IMR-90 (cell line): ENCODE measurements at regions of chr12 and their contacts with region 1.

Region 1: GRCh38 chr12:63917864-63918799 is 73.6 kb downstream of the SRGAP1 start:
- DNase-seq: peak; percentile 96
- ATAC-seq: peak; percentile 56
- H3K4me3 ChIP-seq: no peak overlapping the region
- H3K27ac ChIP-seq: peak overlapping the region; percentile 100
- H3K4me1 ChIP-seq: peaks cover 25% of the 10 kb centered on the region
- H3K27me3 ChIP-seq: no peaks in the 10 kb centered on the region
- CTCF ChIP-seq: no peak
- POLR2A ChIP-seq: 0 out of 2 replicates have a peak, but pooled peaks have one; percentile 56
- RAD21 ChIP-seq: peak; percentile 4; the same call in 1 of the 2 replicates

Region 2: DNA sequence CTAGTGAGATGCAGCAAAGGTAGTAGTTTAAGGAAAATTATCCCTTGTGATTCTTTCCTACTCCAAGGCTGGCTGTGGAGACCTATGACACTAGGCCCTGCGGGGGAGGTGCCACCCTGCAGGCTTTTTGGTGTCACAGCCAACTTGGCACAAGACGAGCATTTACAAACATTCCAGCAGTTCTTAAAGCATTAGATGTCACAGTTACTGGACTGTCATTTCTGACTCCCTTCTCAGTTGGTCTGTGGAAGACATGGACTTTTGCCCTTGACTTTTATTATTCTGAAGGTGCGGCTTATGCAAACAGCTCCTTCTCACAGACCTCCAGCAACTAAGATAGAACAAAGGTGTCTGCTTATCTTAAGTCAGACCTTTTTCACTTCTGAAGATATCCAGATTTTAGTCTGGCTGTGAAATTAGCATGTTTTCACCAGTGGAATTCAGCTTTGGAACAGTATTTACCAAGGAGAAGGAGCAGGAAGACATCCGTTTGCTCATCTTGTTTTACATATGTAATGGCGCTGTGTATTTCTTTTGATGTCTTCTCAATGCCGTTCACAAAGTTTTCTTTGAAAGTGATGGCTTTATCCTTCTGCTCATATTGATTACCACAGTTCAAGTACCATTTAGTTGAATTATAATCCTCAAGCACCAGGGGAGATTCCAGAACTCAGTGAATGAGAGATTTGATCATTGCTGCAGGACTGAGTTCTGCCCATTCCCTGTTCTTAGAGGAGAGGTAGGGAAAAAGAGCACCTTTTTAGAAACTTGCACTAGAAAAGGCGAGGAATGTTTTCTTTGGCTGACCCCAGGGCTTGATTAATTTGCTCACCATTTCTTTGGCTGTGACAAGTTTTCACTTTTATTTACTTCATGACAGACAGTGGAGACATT is 55.7 kb before region 1 on chr12:
- CTCF ChIA-PET with region 1: no interaction called
- POLR2A ChIA-PET with region 1: no interaction called
- dilution Hi-C with region 1: no loop called
- in situ Hi-C with region 1: no loop called
- intact Hi-C with region 1: loop called (anchors 5 kb)
- DNase-seq: no peak
- ATAC-seq: no peak; the same call in 1 of the 2 replicates
- H3K4me3 ChIP-seq: no peak overlapping the region
- H3K27ac ChIP-seq: peak overlapping the region; percentile 40; the same call in 1 of the 2 replicates
- H3K4me1 ChIP-seq: peaks cover 18% of the 10 kb centered on the region
- H3K27me3 ChIP-seq: no peaks in the 10 kb centered on the region
- CTCF ChIP-seq: no peak
- POLR2A ChIP-seq: no peak
- RAD21 ChIP-seq: no peak

Region 3: DNA sequence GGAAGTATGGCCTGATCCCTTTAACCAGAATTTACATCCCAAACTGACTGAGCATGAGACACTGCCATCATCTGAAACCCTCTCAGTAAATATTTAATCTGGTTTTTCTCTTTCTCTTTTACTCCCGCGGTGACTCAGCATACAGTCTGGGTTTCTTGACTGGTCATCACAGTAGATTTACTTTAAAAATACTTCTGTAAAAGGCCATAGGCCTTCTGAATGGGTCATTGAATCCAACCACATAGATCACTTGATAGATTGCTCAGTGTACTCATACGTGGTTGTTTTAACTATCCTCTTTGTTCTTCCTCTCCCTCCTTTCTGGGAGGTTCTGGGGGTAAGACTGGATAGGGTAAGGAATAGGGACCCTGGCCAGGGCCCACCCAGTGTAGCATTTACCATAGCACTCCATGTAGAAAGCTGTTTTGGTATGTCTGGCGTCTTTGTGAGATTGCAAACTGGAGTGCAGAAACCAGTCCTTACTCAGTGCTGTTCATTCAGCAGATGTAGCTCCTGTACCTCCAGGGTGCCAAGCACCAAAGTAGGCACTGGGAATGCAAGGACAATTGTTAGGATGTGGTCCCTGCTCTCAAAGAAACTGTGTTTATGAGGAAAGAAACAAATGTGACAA is 92.1 kb after region 1 on chr12:
- CTCF ChIA-PET with region 1: no interaction called
- POLR2A ChIA-PET with region 1: no interaction called
- dilution Hi-C with region 1: no loop called
- in situ Hi-C with region 1: no loop called
- intact Hi-C with region 1: loop called (anchors 2 kb)
- DNase-seq: peak; percentile 95
- ATAC-seq: peak; percentile 83
- H3K4me3 ChIP-seq: no peak overlapping the region
- H3K27ac ChIP-seq: peak overlapping the region; percentile 98
- H3K4me1 ChIP-seq: peaks cover 21% of the 10 kb centered on the region
- H3K27me3 ChIP-seq: no peaks in the 10 kb centered on the region
- CTCF ChIP-seq: 0 out of 2 replicates have a peak, but pooled peaks have one; percentile 8
- POLR2A ChIP-seq: no peak
- RAD21 ChIP-seq: peak; percentile 23

Region 4: DNA sequence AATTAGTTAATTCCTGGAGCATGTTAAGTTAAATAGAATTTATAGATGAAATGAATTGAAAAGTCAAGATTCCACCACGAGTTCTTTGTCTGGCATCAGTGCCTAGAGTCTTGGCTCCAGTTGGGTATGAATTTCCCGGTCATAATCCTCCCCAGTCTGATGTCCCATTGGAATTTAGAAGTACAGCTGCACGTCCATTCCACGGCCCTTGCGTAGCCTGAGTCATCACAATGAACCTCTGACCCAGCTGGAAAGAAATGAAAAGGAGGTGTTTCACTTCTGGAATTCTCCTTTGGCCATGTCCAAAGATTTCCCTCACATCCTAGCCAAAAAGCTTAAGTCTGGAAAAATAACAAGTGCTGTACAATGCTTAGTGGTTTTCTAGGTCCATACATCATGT is 181.3 kb after region 1 on chr12:
- CTCF ChIA-PET with region 1: no interaction called
- POLR2A ChIA-PET with region 1: no interaction called
- dilution Hi-C with region 1: no loop called
- in situ Hi-C with region 1: no loop called
- intact Hi-C with region 1: loop called (anchors 5 kb)
- DNase-seq: peak; percentile 96
- ATAC-seq: peak; percentile 85
- H3K4me3 ChIP-seq: no peak overlapping the region
- H3K27ac ChIP-seq: peak overlapping the region; percentile 64
- H3K4me1 ChIP-seq: peaks cover 17% of the 10 kb centered on the region
- H3K27me3 ChIP-seq: no peaks in the 10 kb centered on the region
- CTCF ChIP-seq: no peak
- POLR2A ChIP-seq: no peak
- RAD21 ChIP-seq: no peak; the same call in 1 of the 2 replicates

Region 5: GRCh38 chr12:64181504-64182291 is 263.6 kb after region 1 on chr12:
- CTCF ChIA-PET with region 1: no interaction called
- POLR2A ChIA-PET with region 1: no interaction called
- dilution Hi-C with region 1: no loop called
- in situ Hi-C with region 1: no loop called
- intact Hi-C with region 1: loop called (anchors 1 kb)
- DNase-seq: peak; percentile 99
- ATAC-seq: peak; percentile 86
- H3K4me3 ChIP-seq: peak overlapping the region; percentile 10; the same call in 1 of the 2 replicates
- H3K27ac ChIP-seq: peak overlapping the region; percentile 98
- H3K4me1 ChIP-seq: peaks cover 24% of the 10 kb centered on the region
- H3K27me3 ChIP-seq: no peaks in the 10 kb centered on the region
- CTCF ChIP-seq: peak; percentile 61
- POLR2A ChIP-seq: peak; percentile 63; the same call in 1 of the 2 replicates
- RAD21 ChIP-seq: peak; percentile 63

Region 6: GRCh38 chr12:64256166-64256800 is 338.2 kb after region 1 on chr12:
- CTCF ChIA-PET with region 1: interaction called, 3 read pairs
- POLR2A ChIA-PET with region 1: no interaction called
- dilution Hi-C with region 1: no loop called
- in situ Hi-C with region 1: no loop called
- intact Hi-C with region 1: loop called (anchors 10 kb)
- DNase-seq: peak; percentile 67
- ATAC-seq: peak; percentile 66
- H3K4me3 ChIP-seq: no peak overlapping the region
- H3K27ac ChIP-seq: no peak overlapping the region
- H3K4me1 ChIP-seq: peaks cover 3% of the 10 kb centered on the region; the same call in 1 of the 2 replicates
- H3K27me3 ChIP-seq: no peaks in the 10 kb centered on the region
- CTCF ChIP-seq: peak; percentile 89
- POLR2A ChIP-seq: no peak
- RAD21 ChIP-seq: peak; percentile 95